Cardiac septum (tissue), 1 donor: ENCODE measurements at regions of chr10 and their contacts with region 1.

Region 1: GRCh38 chr10:42638055-42638820 is at the start of gene ZNF33B:
- DNase-seq: peak; percentile 98
- total RNA-seq, gene ZNF33B: 7.4 TPM

Region 2: GRCh38 chr10:42552493-42553407 is 85.5 kb before region 1 on chr10:
- intact Hi-C with region 1: loop called (anchors 2 kb)
- DNase-seq: peak; percentile 98

Region 3: GRCh38 chr10:42782446-42783180 is 144.4 kb after region 1 on chr10 and contains the start of gene BMS1:
- intact Hi-C with region 1: loop called (anchors 10 kb)
- DNase-seq: peak; percentile 95
- total RNA-seq, gene BMS1: 13.4 TPM

Region 4: GRCh38 chr10:42827201-42827600 is 189.0 kb after region 1 on chr10:
- intact Hi-C with region 1: no loop called
- DNase-seq: no peak